ENCODE measurements at regions of chr15 and their contacts with region 1.

Region 1: GRCh38 chr15:34367101-34368081 is at the start of gene LPCAT4:
- DNase-seq: peak; percentile 93
- ATAC-seq: peak; percentile 88
- H3K4me3 Mint-ChIP-seq: peak within 1 kb of the TSS; percentile 99
- H3K27ac Mint-ChIP-seq: peak within 1 kb of the TSS; percentile 97
- H3K4me1 Mint-ChIP-seq: peaks cover 33% of the 10 kb centered on the region
- H3K27me3 Mint-ChIP-seq: no peaks in the 10 kb centered on the region
- CTCF ChIP-seq: peak; percentile 93
- total RNA-seq, gene LPCAT4: 55.6 to 56.9 TPM

Region 2: GRCh38 chr15:34055853-34056595 is 311.4 kb before region 1 on chr15:
- CTCF ChIA-PET with region 1: interaction called, 12 read pairs
- POLR2A ChIA-PET with region 1: interaction called, 4 read pairs
- intact Hi-C with region 1: no loop called
- DNase-seq: no peak
- ATAC-seq: no peak
- H3K4me3 Mint-ChIP-seq: no peak overlapping the region
- H3K27ac Mint-ChIP-seq: no peak overlapping the region
- H3K4me1 Mint-ChIP-seq: no peaks in the 10 kb centered on the region
- H3K27me3 Mint-ChIP-seq: no peaks in the 10 kb centered on the region
- CTCF ChIP-seq: no peak

Region 3: DNA sequence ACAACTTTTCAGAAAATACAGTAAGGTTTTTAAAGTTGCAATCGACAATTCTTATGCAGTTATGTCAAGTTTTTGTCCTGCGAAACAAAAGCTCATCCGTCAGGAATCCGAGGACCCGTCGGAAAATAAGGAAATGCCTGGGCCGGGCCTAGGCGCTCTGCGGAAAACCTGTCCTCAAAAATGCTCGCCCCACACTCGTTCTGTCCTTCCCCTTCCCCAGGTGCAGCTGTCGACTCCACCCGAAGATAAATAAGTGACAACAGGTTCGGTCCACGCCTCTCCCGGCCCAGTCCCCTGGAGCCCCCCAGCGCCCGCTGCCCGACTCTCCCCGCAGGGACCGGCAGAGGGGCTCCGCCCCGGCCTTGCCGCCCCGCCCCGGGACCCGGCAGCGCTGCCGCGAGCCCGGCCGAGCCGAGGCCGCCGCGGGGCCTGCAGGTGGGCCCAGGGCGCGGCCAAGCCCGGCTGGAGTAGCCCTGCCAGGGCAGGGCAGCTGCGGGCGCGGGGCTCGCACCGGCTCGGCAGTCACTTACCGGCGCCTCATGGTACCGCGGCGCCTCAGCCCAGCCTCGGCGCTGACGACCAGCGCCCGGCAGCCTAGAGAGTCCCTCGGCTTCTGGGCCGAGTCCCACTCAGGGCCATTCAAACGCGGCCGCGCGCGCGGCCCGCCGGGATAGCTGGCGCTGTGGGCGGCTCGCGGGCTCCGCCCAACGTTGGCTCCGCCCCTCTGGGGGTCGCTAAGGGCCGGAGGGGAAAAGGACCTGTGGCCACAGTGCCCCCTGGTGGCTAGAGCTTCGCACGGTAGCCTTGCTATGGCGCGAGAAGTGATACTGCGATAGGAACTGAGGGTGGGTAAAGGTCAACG is 157.7 kb before region 1 on chr15 and contains the start of gene KATNBL1:
- CTCF ChIA-PET with region 1: interaction called, 12 read pairs
- POLR2A ChIA-PET with region 1: no interaction called
- intact Hi-C with region 1: no loop called
- DNase-seq: peak; percentile 98
- ATAC-seq: peak; percentile 97
- H3K4me3 Mint-ChIP-seq: peak within 1 kb of the TSS; percentile 88
- H3K27ac Mint-ChIP-seq: peak within 1 kb of the TSS; percentile 87
- H3K4me1 Mint-ChIP-seq: peaks cover 24% of the 10 kb centered on the region
- H3K27me3 Mint-ChIP-seq: no peaks in the 10 kb centered on the region
- CTCF ChIP-seq: peak; percentile 77
- total RNA-seq, gene KATNBL1: 41.6 to 45.5 TPM

Region 4: GRCh38 chr15:34233614-34234013 is 133.8 kb before region 1 on chr15:
- CTCF ChIA-PET with region 1: interaction called, 10 read pairs
- POLR2A ChIA-PET with region 1: no interaction called
- intact Hi-C with region 1: no loop called
- DNase-seq: no peak
- ATAC-seq: no peak
- H3K4me3 Mint-ChIP-seq: no peak overlapping the region
- H3K27ac Mint-ChIP-seq: peak overlapping the region; percentile 40
- H3K4me1 Mint-ChIP-seq: peaks cover 5% of the 10 kb centered on the region
- H3K27me3 Mint-ChIP-seq: no peaks in the 10 kb centered on the region
- CTCF ChIP-seq: no peak

Region 5: DNA sequence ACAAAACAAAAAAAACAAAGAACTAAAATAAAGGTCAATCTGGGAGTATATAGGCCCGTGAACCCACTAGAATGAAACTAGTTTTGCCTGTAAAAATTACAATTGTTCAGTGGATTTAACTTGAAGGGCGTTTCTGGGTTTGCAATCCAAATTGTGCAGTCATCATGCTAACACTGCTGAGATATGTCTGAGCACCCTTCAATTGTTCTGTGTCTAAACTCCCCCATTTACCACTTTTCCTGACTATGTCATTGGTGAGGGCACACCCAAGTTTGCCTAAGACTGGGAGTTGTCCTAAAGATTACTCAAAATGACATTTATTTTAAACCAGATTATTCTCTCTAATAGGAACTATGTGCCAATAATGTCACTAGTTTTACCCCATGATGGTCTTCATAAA is 88.0 kb before region 1 on chr15:
- CTCF ChIA-PET with region 1: no interaction called
- POLR2A ChIA-PET with region 1: no interaction called
- intact Hi-C with region 1: no loop called
- DNase-seq: no peak
- ATAC-seq: no peak
- H3K4me3 Mint-ChIP-seq: no peak overlapping the region
- H3K27ac Mint-ChIP-seq: no peak overlapping the region
- H3K4me1 Mint-ChIP-seq: peaks cover 17% of the 10 kb centered on the region
- H3K27me3 Mint-ChIP-seq: no peaks in the 10 kb centered on the region
- CTCF ChIP-seq: no peak

Region 6: GRCh38 chr15:34318277-34319079 is 48.9 kb before region 1 on chr15:
- CTCF ChIA-PET with region 1: interaction called, 10 read pairs
- POLR2A ChIA-PET with region 1: no interaction called
- intact Hi-C with region 1: no loop called
- DNase-seq: peak; percentile 51
- ATAC-seq: peak; percentile 76
- H3K4me3 Mint-ChIP-seq: peak overlapping the region; percentile 86
- H3K27ac Mint-ChIP-seq: peak overlapping the region; percentile 91
- H3K4me1 Mint-ChIP-seq: peaks cover 50% of the 10 kb centered on the region
- H3K27me3 Mint-ChIP-seq: no peaks in the 10 kb centered on the region
- CTCF ChIP-seq: no peak

Region 7: GRCh38 chr15:34337557-34338306 is 29.7 kb before region 1 on chr15 and contains the start of gene SLC12A6:
- CTCF ChIA-PET with region 1: interaction called, 42 read pairs
- POLR2A ChIA-PET with region 1: interaction called, 4 read pairs
- intact Hi-C with region 1: no loop called
- DNase-seq: peak; percentile 91
- ATAC-seq: peak; percentile 85
- H3K4me3 Mint-ChIP-seq: peak within 1 kb of the TSS; percentile 99
- H3K27ac Mint-ChIP-seq: peak within 1 kb of the TSS; percentile 95
- H3K4me1 Mint-ChIP-seq: peaks cover 49% of the 10 kb centered on the region
- H3K27me3 Mint-ChIP-seq: no peaks in the 10 kb centered on the region
- CTCF ChIP-seq: no peak
- total RNA-seq, gene SLC12A6: 22.2 to 24.8 TPM

Region 8: GRCh38 chr15:34355241-34355640 is 12.2 kb before region 1 on chr15:
- CTCF ChIA-PET with region 1: interaction called, 17 read pairs
- POLR2A ChIA-PET with region 1: interaction called, 5 read pairs
- intact Hi-C with region 1: no loop called
- DNase-seq: no peak
- ATAC-seq: no peak
- H3K4me3 Mint-ChIP-seq: no peak overlapping the region
- H3K27ac Mint-ChIP-seq: no peak overlapping the region
- H3K4me1 Mint-ChIP-seq: no peaks in the 10 kb centered on the region
- H3K27me3 Mint-ChIP-seq: no peaks in the 10 kb centered on the region
- CTCF ChIP-seq: no peak

Region 9: DNA sequence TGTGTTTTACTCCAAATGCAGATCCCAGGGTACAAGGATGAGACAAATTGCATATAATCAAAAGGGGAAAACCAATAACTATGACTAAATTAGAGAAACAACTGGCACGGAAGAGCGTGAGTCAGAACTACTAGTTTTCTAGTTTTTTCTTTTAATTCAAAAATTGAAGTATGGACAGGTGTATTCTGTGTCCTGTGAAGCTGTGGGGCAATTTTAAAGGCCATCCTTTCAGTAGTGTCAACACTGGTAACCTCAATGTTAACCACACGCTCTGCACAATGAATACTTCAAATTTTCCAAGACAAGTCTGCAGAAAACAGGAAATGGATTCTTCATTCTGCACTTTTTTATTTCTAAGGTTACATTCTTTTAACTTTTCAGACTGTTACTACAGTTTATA is 102.7 kb after region 1 on chr15:
- CTCF ChIA-PET with region 1: no interaction called
- POLR2A ChIA-PET with region 1: no interaction called
- intact Hi-C with region 1: no loop called
- DNase-seq: peak; percentile 11
- ATAC-seq: peak; percentile 84
- H3K4me3 Mint-ChIP-seq: no peak overlapping the region
- H3K27ac Mint-ChIP-seq: no peak overlapping the region
- H3K4me1 Mint-ChIP-seq: peaks cover 8% of the 10 kb centered on the region
- H3K27me3 Mint-ChIP-seq: peaks cover 14% of the 10 kb centered on the region
- CTCF ChIP-seq: no peak

Region 10: GRCh38 chr15:34514251-34514670 is 146.9 kb after region 1 on chr15:
- CTCF ChIA-PET with region 1: no interaction called
- POLR2A ChIA-PET with region 1: no interaction called
- intact Hi-C with region 1: no loop called
- DNase-seq: peak; percentile 40
- ATAC-seq: peak; percentile 59
- H3K4me3 Mint-ChIP-seq: peak overlapping the region; percentile 76
- H3K27ac Mint-ChIP-seq: no peak overlapping the region
- H3K4me1 Mint-ChIP-seq: peaks cover 19% of the 10 kb centered on the region
- H3K27me3 Mint-ChIP-seq: peaks cover 50% of the 10 kb centered on the region
- CTCF ChIP-seq: no peak

Region 11: DNA sequence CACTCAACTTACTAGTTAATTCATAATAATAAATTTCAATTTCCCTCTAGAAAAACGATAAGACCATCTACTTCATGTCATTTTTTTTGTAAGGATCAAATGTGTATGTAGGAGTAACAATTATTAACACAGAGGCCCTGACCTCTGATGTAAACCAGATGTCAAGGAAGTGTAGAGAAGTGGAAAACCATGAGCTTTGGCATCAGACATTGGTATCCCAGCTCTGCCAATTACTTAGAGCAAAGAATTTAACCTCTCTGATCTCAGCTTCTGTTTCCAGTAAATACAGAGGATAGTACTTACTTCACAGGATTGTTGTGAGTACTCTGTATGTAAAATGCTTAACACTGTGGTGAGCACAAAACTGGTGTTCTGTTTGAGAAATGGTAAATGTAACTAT is 584.6 kb after region 1 on chr15:
- CTCF ChIA-PET with region 1: no interaction called
- POLR2A ChIA-PET with region 1: no interaction called
- intact Hi-C with region 1: no loop called
- DNase-seq: no peak
- ATAC-seq: no peak
- H3K4me3 Mint-ChIP-seq: no peak overlapping the region
- H3K27ac Mint-ChIP-seq: peak overlapping the region; percentile 34
- H3K4me1 Mint-ChIP-seq: peaks cover 9% of the 10 kb centered on the region
- H3K27me3 Mint-ChIP-seq: no peaks in the 10 kb centered on the region
- CTCF ChIP-seq: no peak

Measured in activated CD8-positive, alpha-beta T cell treated with anti-CD3 and anti-CD28 coated beads for 36 hours (primary cell).